Activated CD4-positive, alpha-beta memory T cell treated with anti-CD3 and anti-CD28 coated beads for 36 hours (primary cell): ENCODE measurements at regions of chr19 and their contacts with region 1.

Region 1: GRCh38 chr19:4638828-4639530 is at the start of gene TNFAIP8L1:
- DNase-seq: peak; percentile 99
- H3K4me3 Mint-ChIP-seq: peak within 1 kb of the TSS; percentile 94
- H3K27ac Mint-ChIP-seq: peak within 1 kb of the TSS; percentile 96
- H3K4me1 Mint-ChIP-seq: peaks cover 25% of the 10 kb centered on the region
- H3K27me3 Mint-ChIP-seq: no peaks in the 10 kb centered on the region
- total RNA-seq, gene TNFAIP8L1: 17.2 to 17.4 TPM

Region 2: DNA sequence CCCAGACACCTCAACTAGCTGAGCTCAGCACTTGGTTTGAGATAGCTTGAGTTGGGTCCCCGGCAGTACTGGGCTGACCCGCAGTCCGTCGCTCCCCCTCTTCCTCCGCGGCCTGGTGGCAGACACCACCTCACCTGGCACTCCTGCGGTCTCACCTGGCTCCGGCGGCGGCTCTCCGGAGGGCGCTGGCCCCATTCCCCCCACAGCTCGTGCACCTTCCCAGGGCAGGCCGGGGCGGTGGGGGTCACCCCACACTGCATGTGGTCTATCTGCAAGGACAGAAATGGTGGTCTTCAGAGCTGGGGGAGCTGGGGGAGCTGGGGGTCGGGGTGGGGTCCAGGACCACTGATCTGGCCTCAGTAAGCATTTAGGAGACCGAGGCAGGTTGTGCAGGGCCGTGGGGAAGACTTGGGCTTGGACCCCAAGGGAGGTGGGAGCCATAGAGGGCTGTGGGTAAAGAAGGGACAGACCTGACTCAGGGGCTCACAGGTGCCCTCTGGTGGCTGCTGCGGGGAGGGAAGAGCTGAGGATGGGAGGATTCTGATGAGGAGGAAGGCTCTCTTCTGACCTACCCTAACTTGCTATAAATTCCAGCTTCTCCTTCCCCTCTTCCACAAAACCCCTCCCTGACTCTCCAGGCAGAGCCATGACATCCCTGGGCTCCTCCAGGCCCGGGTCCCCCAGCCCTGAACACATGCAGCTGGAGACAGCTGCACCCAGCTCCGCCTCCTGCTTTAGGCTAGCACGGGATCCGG is 114.0 kb before region 1 on chr19:
- CTCF ChIA-PET with region 1: interaction called, 10 read pairs
- POLR2A ChIA-PET with region 1: no interaction called
- intact Hi-C with region 1: no loop called
- DNase-seq: peak; percentile 80
- H3K4me3 Mint-ChIP-seq: no peak overlapping the region
- H3K27ac Mint-ChIP-seq: no peak overlapping the region
- H3K4me1 Mint-ChIP-seq: no peaks in the 10 kb centered on the region
- H3K27me3 Mint-ChIP-seq: peaks cover 7% of the 10 kb centered on the region

Region 3: DNA sequence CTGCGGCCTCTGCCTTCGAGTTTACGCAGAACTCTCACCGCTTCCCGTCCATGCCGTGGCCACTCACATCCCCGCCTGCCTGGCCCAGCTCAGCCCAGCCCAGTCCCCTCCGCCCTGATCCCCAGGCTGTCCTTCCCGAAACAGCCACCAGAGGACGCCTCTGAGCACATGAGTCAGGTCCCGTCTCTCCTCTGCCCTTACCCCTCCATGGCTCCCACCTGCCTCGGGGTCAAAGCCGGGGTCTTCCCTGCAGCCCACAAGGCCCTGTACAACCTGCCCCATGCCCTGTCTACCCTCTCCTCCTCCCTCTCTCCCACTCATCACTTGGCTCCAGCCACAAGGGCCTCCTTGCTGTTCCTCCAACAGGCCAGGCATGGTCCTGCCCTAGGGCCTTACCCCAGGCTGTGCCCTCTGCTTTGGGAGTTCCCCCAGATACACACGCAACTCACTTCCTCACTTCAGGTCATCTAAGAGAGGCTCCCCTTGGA is 71.4 kb before region 1 on chr19:
- CTCF ChIA-PET with region 1: interaction called, 66 read pairs
- POLR2A ChIA-PET with region 1: no interaction called
- intact Hi-C with region 1: no loop called
- DNase-seq: peak; percentile 80
- H3K4me3 Mint-ChIP-seq: no peak overlapping the region
- H3K27ac Mint-ChIP-seq: no peak overlapping the region
- H3K4me1 Mint-ChIP-seq: no peaks in the 10 kb centered on the region
- H3K27me3 Mint-ChIP-seq: peaks cover 9% of the 10 kb centered on the region

Region 4: DNA sequence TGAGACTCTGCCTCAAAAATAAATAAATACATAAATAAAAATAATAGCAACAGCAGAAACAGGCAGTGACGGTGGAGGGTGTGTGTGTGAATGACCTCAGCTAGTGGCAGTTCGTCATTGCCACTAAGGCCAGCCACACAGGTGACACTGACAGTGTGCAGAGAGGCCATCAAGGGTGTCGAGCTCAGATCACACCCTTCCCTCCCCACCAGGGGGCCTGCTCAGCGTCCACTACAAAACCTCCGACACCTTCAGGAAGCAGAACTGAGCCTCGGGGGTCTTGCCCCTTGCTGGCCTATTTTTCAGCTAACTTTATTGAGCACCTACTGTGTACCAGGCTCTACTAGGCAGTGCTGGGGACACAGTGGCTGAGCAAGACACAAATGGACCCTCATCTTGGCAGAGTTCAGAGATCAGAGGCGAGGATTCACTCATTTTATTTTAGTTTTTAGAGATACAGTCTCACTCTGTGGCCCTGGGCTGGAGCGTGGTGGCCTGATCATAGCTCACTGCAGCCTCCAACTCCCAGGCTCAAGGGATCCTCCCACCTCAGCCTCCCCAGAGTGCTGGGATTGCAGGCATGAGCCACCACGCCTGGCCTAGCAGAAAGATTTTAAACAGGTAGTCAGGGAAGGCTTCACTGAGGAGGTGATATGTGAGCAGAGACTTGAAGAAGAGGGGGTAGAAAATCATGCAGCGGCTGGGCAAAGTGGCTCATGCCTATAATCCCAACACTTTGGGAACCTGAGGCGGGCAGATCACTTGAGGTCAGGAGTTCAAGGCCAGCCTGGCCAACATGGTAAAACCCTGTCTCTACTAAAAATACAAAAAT is 49.2 kb before region 1 on chr19:
- CTCF ChIA-PET with region 1: interaction called, 10 read pairs
- POLR2A ChIA-PET with region 1: no interaction called
- intact Hi-C with region 1: no loop called
- DNase-seq: peak; percentile 46
- H3K4me3 Mint-ChIP-seq: no peak overlapping the region
- H3K27ac Mint-ChIP-seq: no peak overlapping the region
- H3K4me1 Mint-ChIP-seq: no peaks in the 10 kb centered on the region
- H3K27me3 Mint-ChIP-seq: peaks cover 54% of the 10 kb centered on the region